ENCODE measurements at regions of chr1 and their contacts with region 1.

Region 1: DNA sequence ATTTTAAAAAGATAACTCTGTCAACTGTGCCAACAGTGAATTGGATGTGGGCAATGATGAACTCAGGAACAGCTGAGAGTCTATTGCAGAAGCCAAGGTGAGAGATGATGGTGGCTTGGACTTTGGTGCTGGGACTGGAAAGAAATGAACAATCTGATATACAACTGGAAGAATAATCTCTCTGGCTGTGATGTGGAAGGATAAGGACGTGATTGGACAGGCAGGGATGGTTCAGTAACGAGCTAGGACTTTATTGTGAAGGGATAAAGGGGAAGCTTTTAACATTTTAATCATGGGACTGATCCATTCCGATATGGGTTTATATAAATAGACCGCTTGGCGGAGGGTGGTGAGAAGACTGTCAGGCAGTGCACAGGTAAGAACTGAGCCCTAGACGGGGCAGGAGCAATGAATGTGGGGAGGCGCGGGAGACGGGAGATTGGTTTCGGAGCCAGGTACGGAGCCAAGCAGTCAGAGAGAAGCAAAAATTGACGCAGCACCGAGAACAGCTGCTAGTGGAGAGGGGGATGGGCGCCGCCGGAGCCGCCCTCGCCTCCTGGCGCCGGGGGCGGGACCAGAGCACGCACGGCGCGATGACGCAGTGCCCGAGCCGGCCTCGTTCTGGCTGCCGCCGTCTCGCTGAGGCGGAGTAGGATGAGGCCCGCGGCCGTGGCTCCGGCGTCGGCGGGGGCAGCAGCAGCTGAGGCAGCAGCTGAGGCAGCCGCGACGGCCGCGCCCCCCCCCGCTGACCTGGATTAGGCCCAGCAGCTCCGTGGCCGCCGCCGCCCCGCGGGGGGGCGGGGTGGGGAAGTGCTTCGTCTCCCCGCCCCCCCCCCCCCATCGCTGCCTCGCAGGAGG is at the start of gene RNF11:
- DNase-seq: peak; percentile 86 to 93
- ATAC-seq: peak; percentile 85 to 87
- H3K4me3 ChIP-seq: peak within 1 kb of the TSS; percentile 84 to 97 (median 94)
- H3K27ac ChIP-seq: peak within 1 kb of the TSS; percentile 99 to 100 (median 99)
- H3K4me1 ChIP-seq: peaks cover 25 to 41% of the 10 kb centered on the region in 2 donors
- H3K27me3 ChIP-seq: no peaks in the 10 kb centered on the region
- CTCF ChIP-seq: peak in 1 of 5 experiments; percentile 11
- POLR2A ChIP-seq: peak; percentile 94 to 96
- total RNA-seq, gene RNF11: 77.6 to 86.5 (median 85.3) TPM

Region 2: DNA sequence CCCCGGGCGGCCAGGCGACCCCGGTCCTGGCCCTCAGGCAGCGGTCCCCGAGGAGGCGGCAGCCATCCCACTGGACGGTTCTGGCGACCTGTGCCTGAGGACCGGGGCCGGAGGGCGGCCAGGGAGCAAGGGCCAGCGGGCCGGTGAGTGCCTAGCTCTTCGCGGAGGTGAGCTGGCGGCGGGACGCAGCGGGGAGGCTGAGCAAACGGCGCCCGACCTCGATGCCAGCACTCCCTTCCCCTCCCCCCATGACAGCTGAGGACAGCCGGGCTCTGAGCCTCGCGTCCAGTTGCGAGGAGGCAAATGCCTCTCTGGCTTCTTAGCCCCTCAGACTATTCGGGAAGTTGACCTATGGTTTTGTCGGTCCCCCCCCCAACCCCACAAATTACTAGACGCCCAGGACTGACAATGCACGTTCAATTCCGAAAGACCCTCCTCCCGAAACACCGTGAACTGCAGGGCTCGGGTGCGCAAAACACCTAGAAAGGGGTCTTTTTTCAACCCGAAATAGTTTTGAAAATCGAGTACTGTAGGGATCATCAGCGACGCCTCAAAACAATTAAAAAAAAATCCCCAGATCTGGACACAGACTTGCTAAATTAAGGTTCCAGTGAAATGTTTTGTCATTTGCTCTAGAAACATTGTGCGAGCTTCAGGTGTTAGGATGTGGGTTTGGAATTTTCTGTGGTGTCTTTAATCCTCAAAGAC is 257.6 kb before region 1 on chr1:
- in situ Hi-C with region 1: no loop called
- intact Hi-C with region 1: loop called (anchors 1 kb)
- DNase-seq: peak; percentile 71 to 84
- ATAC-seq: peak; percentile 79 to 82
- H3K4me3 ChIP-seq: peak overlapping the region; percentile 73 to 94 (median 88)
- H3K27ac ChIP-seq: peak overlapping the region; percentile 92 to 100 (median 98)
- H3K4me1 ChIP-seq: peaks cover 11 to 25% of the 10 kb centered on the region in 2 donors
- H3K27me3 ChIP-seq: no peaks in the 10 kb centered on the region
- CTCF ChIP-seq: no peak
- POLR2A ChIP-seq: peak; percentile 51 to 58

Region 3: GRCh38 chr1:51296383-51297357 is 60.8 kb after region 1 on chr1:
- in situ Hi-C with region 1: no loop called
- intact Hi-C with region 1: loop called (anchors 5 kb)
- DNase-seq: peak; percentile 57 to 80
- ATAC-seq: peak; percentile 73 to 80
- H3K4me3 ChIP-seq: peak overlapping the region; percentile 54 to 71 (median 66)
- H3K27ac ChIP-seq: peak overlapping the region in 1 of 4 donors; percentile 35
- H3K4me1 ChIP-seq: peaks cover 5 to 12% of the 10 kb centered on the region in 2 donors
- H3K27me3 ChIP-seq: no peaks in the 10 kb centered on the region
- CTCF ChIP-seq: peak; percentile 85 to 98 (median 93)
- POLR2A ChIP-seq: no peak

Region 4: GRCh38 chr1:52056163-52056936 is 820.4 kb after region 1 on chr1 and contains the start of gene BTF3L4:
- in situ Hi-C with region 1: no loop called
- intact Hi-C with region 1: loop called (anchors 1 kb)
- DNase-seq: peak; percentile 96 to 97
- ATAC-seq: peak; percentile 89 to 90
- H3K4me3 ChIP-seq: peak within 1 kb of the TSS; percentile 75 to 87 (median 86)
- H3K27ac ChIP-seq: peak within 1 kb of the TSS; percentile 92 to 98 (median 96)
- H3K4me1 ChIP-seq: peaks cover 38 to 39% of the 10 kb centered on the region in 2 donors
- H3K27me3 ChIP-seq: no peaks in the 10 kb centered on the region
- CTCF ChIP-seq: no peak
- POLR2A ChIP-seq: peak; percentile 85 to 86
- total RNA-seq, gene BTF3L4: 68.4 to 92.9 (median 72.4) TPM

Measured in gastrocnemius medialis (tissue), 4 donors.